ENCODE measurements at regions of chrX and their contacts with region 1.

Region 1: DNA sequence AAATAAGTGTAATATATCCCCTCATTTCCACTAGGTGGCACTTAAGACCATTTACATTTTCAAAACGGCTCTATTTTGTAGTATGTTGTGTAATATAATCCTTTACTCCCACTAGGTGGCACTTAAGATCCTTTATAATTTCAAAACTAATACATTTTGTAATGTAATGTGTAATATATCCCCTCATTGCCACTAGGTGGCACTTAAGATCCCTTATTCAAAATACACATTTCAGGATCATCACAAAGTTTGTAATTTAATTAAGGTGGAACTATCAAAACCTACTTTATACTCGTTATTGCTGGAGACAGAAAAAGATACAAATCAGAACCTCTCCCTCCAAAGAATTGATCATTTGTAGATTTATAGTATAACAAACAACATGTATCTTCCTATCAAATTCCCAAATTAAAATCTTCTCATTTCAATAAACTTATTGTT is 132.5 kb downstream of the ARHGAP6 start:
- DNase-seq: no peak
- H3K4me3 Mint-ChIP-seq: no peak overlapping the region
- H3K27ac Mint-ChIP-seq: no peak overlapping the region
- H3K4me1 Mint-ChIP-seq: no peaks in the 10 kb centered on the region
- H3K27me3 Mint-ChIP-seq: no peaks in the 10 kb centered on the region

Region 2: DNA sequence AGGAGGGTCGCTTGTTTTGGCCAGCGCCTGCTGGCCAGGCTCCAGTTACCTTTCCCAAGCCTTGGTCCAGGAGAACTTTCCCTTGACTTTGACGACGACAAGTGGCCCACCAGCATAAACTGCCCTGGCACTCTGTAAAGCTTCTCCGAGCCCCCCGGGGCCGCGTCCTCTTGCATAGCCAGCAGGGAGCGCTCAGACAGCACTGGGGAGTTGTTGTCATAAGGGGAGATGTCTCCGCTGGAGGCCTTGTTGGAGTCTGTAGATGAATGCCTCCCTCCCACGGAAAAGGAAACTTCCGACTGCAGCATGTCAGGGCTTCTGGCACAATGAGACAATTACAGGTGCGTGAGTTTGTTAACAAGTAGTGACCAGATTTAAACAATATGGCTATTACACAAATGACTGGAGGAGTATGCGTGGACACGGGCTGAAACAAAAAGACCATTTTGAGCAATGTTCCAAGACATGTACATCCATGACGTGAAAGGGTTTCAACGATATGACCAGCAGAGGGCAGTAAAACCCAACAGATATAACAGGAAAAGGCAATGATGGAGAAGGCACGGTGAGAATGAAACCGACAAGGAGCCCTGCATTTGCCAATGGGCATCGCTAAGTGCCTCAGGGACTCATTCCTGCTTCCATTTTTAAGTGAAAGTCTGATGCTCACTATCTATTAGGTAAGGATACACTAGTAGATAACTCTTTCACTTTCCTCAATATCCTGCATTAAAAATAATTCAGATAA is 389.1 kb before region 1 on chrX:
- CTCF ChIA-PET with region 1: interaction called, 4 read pairs
- POLR2A ChIA-PET with region 1: no interaction called
- intact Hi-C with region 1: loop called (anchors 2 kb)
- DNase-seq: peak; percentile 36
- H3K4me3 Mint-ChIP-seq: no peak overlapping the region
- H3K27ac Mint-ChIP-seq: no peak overlapping the region
- H3K4me1 Mint-ChIP-seq: peaks cover 2% of the 10 kb centered on the region
- H3K27me3 Mint-ChIP-seq: peaks cover 2% of the 10 kb centered on the region

Region 3: GRCh38 chrX:11758400-11759171 is 225.4 kb after region 1 on chrX:
- CTCF ChIA-PET with region 1: no interaction called
- POLR2A ChIA-PET with region 1: no interaction called
- intact Hi-C with region 1: loop called (anchors 2 kb)
- DNase-seq: peak; percentile 92
- H3K4me3 Mint-ChIP-seq: peak overlapping the region; percentile 95
- H3K27ac Mint-ChIP-seq: peak overlapping the region; percentile 99
- H3K4me1 Mint-ChIP-seq: peaks cover 23% of the 10 kb centered on the region
- H3K27me3 Mint-ChIP-seq: peaks cover under 1% of the 10 kb centered on the region

Region 4: GRCh38 chrX:11787564-11787963 is 254.3 kb after region 1 on chrX:
- CTCF ChIA-PET with region 1: interaction called, 3 read pairs
- POLR2A ChIA-PET with region 1: no interaction called
- intact Hi-C with region 1: loop called (anchors 1 kb)
- DNase-seq: peak; percentile 82
- H3K4me3 Mint-ChIP-seq: peak overlapping the region; percentile 43
- H3K27ac Mint-ChIP-seq: no peak overlapping the region
- H3K4me1 Mint-ChIP-seq: peaks cover 15% of the 10 kb centered on the region
- H3K27me3 Mint-ChIP-seq: no peaks in the 10 kb centered on the region

Region 5: DNA sequence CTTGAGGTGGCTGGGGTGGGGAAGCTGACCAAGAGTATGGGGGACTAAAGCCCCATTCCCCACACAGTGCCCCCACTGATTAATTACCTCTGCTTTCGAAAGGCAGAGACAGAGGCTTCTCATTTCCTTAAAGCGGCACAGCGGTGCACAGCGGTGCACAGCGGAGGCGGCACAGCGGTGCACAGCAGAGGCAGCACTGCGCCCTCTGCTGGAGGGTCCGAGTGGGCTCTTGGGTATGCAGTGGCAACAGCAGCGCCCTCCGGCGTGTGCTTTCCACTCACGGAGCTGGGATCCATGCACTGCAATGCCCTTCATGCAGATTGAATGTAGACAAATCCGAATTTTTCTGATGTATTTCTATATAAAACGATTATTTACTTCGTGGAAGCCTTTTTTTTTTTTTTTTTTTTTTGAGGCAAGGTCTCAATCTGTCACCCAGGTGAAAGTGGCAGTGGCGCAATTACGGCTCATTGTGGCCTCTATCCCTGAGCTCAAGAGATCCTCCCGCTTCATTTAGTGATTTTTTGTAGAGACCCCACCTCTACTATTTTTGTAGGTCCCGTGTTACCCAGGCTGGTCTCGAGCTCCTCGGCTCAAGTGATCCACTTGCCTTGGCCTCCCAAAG is 1238.3 kb after region 1 on chrX:
- CTCF ChIA-PET with region 1: no interaction called
- POLR2A ChIA-PET with region 1: no interaction called
- intact Hi-C with region 1: loop called (anchors 1 kb)
- DNase-seq: peak; percentile 78
- H3K4me3 Mint-ChIP-seq: no peak overlapping the region
- H3K27ac Mint-ChIP-seq: no peak overlapping the region
- H3K4me1 Mint-ChIP-seq: peaks cover 2% of the 10 kb centered on the region
- H3K27me3 Mint-ChIP-seq: peaks cover 14% of the 10 kb centered on the region